Right ventricle myocardium inferior (tissue), 1 donor: ENCODE measurements at regions of chr5 and their contacts with region 1.

Region 1: GRCh38 chr5:107673368-107674136 is 2.8 kb upstream of the EFNA5 start:
- DNase-seq: peak; percentile 82
- ATAC-seq: peak; percentile 70

Region 2: GRCh38 chr5:106910486-106910885 is 763.1 kb before region 1 on chr5:
- intact Hi-C with region 1: loop called (anchors 5 kb)
- DNase-seq: no peak
- ATAC-seq: no peak

Region 3: DNA sequence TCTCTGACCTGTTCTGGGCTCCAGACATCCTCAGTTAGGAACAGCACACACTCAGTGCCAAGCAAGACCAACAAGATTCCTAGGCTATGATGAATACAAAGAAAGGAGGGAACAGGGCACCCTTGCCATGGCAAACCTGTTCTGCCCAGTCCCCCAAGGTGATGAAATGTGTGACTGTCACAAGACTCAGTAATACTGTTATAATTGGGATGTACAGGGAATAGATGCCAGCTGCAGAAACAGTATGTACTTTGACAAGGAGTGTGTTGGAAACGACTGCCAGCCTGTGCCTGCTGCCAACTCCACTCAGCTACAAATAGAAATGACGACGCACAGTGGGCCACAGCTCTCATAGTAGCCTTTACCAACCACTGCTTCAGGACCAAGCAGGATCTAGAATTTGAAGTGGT is 455.8 kb before region 1 on chr5:
- intact Hi-C with region 1: loop called (anchors 1 kb)
- DNase-seq: peak; percentile 75
- ATAC-seq: peak; percentile 96

Region 4: DNA sequence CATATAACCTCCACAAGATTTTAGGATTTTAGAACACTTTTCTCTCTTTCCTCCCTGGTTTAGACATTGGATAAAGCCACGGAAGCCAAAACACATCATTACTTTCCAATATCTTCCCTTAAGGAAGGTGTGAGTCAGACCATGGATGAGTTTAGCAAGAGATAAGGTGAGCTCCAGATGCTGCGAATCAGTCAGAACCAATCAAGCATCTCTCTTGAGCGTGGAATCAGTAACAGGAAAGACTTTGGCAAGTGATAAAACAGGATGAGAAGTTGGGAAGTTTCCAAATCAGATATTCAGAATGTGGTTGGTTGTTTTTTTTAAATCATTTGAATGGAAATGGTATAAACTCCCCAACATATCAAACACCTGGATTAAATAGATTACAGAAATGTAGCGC is 400.6 kb before region 1 on chr5:
- intact Hi-C with region 1: no loop called
- DNase-seq: no peak
- ATAC-seq: no peak

Region 5: DNA sequence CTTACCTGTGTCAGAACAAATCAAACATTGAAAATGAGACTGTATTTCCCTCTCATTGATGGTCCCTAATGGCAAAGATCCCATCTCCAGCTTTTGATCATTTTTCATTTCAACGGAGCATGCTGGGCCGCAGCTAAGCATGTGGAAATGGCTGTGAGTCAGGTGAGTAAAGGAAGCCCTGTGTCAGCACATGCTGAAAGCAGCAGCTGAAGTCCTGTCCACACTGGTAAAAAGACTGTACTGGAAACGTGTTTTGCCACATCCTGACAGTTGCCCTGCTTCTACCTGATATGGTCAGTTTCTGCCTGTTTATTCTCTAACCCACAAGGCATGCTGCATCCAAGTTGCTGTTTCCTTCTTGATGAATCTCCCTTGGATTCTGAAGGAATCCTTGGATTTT is 332.9 kb before region 1 on chr5:
- intact Hi-C with region 1: no loop called
- DNase-seq: no peak
- ATAC-seq: no peak

Region 6: DNA sequence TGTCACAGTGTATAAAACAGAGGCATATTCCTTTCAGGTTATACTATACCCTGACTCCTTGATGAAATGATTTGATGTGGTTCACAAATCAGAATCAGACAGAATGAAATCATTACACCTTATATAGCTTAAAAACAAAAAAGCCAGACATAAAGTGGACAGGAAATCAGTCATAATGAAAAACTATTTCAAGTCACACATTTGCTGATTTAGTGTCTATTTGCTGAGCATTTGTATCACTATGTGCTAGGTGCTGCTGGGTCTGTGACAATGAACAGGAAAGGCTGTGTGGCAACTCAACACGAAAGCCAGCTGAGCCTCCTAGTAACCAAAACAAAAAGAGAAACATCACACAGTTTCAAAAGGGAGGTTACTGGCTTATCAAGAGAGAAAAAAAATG is 196.8 kb before region 1 on chr5:
- intact Hi-C with region 1: loop called (anchors 5 kb)
- DNase-seq: no peak
- ATAC-seq: peak; percentile 75

Region 7: GRCh38 chr5:107571621-107572536 is 101.7 kb before region 1 on chr5:
- intact Hi-C with region 1: loop called (anchors 2 kb)
- DNase-seq: peak; percentile 94
- ATAC-seq: peak; percentile 88

Region 8: GRCh38 chr5:107618242-107618641 is 55.3 kb before region 1 on chr5:
- intact Hi-C with region 1: no loop called
- DNase-seq: no peak
- ATAC-seq: no peak